Dorsolateral prefrontal cortex (tissue), 120 donors: ENCODE measurements at regions of chr20 and their contacts with region 1.

Region 1: DNA sequence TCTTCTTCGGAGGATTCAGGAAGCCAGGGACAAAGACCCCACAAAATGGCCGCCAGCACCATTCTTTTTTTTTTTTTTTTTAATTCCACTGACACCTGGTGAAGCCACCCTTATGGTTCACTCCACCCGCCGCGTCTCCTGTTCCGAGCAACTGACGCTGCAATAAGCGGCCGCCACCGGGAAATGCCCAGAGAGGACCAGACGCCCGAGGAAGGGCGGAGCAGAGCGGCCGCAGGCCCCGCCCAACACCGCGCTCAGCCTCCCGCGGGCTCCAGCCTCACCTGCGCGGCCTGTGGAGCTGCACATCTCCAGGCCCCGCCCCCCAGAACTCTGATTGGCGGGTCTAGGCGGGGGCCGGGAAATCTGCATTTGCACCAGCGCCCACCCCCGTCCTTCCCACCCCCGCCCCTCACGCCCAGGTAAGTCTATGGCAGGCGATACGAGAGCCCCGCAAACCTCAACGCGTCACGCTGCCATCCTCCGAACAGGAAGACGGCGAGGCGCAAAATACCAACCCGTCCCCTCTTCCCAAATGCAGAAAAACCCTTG is 1.1 kb downstream of the ATP9A start:
- DNase-seq: peak; percentile 61 to 95 (median 85)
- H3K4me3 ChIP-seq: peak overlapping the region; percentile 56 to 98 (median 90)
- H3K27ac ChIP-seq: peak overlapping the region; percentile 28 to 97 (median 91)
- H3K27me3 ChIP-seq: no peaks in the 10 kb centered on the region
- CTCF ChIP-seq: peak in 2 of 56 donors; percentile 9 to 26

Region 2: GRCh38 chr20:51712501-51713197 is 54.4 kb before region 1 on chr20:
- intact Hi-C with region 1: loop called (anchors 5 kb)
- DNase-seq: peak in 6 of 10 donors; percentile 25 to 75 (median 46)
- H3K4me3 ChIP-seq: no peak overlapping the region
- H3K27ac ChIP-seq: peak overlapping the region in 18 of 59 donors; percentile 7 to 66 (median 38)
- H3K27me3 ChIP-seq: no peaks in the 10 kb centered on the region
- CTCF ChIP-seq: peak in 53 of 56 donors; percentile 23 to 71 (median 57)

Region 3: GRCh38 chr20:51742685-51743357 is 24.3 kb before region 1 on chr20:
- intact Hi-C with region 1: loop called in 1 of 2 experiments (anchors 2 kb)
- DNase-seq: no peak
- H3K4me3 ChIP-seq: peak overlapping the region in 32 of 59 donors; percentile 1 to 51 (median 24)
- H3K27ac ChIP-seq: peak overlapping the region; percentile 55 to 97 (median 86)
- H3K27me3 ChIP-seq: no peaks in the 10 kb centered on the region
- CTCF ChIP-seq: peak in 1 of 56 donors; percentile 1